Activated CD4-positive, alpha-beta T cell treated with anti-CD3 and anti-CD28 coated beads, Interleukin-2, amount 10 ng/mL, durations not matched to agents 24 days and 14 days (primary cell): ENCODE measurements at regions of chr5 and their contacts with region 1.

Region 1: GRCh38 chr5:143968011-143968878 is 156.3 kb downstream of the HMHB1 start:
- DNase-seq: peak; percentile 74
- H3K4me3 Mint-ChIP-seq: no peak overlapping the region
- H3K27ac Mint-ChIP-seq: no peak overlapping the region
- H3K4me1 Mint-ChIP-seq: peaks cover 3% of the 10 kb centered on the region
- H3K27me3 Mint-ChIP-seq: peaks cover 34% of the 10 kb centered on the region

Region 2: DNA sequence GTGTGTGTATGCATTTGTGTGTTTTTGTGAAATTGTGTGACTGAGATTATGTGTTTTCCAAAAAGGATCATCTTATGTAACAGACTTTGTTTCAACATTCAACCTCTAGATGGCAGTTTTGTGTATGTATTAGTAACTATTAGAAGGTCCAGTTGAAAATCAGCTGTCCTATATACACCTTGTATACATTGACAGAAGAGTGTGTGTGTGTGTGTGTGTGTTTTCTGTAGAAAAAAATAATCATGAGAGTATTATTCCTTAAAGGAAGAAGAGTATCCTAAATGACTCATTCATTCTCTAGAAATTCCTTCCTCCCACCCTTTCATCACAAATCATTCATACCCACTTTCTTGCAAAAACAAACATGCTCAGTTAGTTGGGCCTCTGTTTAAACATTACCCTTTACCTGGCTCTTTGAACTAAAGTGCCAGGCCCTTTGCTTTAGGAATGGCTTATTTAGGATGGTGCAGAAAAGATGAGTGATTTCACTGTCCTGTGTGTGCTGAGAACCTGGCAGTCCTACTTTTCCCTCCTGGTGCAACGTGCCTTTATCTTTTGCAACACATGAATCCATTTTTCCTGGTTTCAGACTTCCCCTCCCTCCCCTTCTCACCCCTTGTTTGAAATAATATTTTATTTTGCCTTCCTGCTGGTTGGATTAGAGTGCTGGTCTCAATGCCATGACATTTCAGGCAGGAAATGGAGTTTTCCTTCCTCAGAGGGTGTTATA is 1045.9 kb before region 1 on chr5:
- intact Hi-C with region 1: loop called (anchors 1 kb)
- DNase-seq: no peak
- H3K4me3 Mint-ChIP-seq: no peak overlapping the region
- H3K27ac Mint-ChIP-seq: no peak overlapping the region
- H3K4me1 Mint-ChIP-seq: peaks cover 36% of the 10 kb centered on the region
- H3K27me3 Mint-ChIP-seq: no peaks in the 10 kb centered on the region

Region 3: DNA sequence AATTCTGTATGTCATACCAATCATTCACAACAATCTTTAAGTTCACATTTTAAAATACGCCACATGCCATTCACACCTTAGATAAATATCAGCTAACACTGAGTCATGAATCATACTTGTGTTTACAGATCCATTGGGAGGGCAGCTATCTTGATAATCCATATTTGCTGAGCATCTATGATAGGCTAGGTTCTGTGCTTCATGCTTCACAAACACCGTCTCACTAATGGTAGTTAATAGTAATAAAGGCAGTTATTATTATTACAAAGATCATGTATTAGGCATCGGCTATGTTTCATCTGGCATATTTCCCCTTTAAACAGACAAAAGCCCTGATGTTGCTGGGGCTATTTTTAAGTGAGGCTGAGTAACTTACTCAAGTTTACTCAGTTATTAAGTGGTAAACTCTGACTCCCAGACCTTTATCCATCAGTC is 308.5 kb before region 1 on chr5:
- intact Hi-C with region 1: no loop called
- DNase-seq: no peak
- H3K4me3 Mint-ChIP-seq: no peak overlapping the region
- H3K27ac Mint-ChIP-seq: no peak overlapping the region
- H3K4me1 Mint-ChIP-seq: no peaks in the 10 kb centered on the region
- H3K27me3 Mint-ChIP-seq: peaks cover 19% of the 10 kb centered on the region

Region 4: DNA sequence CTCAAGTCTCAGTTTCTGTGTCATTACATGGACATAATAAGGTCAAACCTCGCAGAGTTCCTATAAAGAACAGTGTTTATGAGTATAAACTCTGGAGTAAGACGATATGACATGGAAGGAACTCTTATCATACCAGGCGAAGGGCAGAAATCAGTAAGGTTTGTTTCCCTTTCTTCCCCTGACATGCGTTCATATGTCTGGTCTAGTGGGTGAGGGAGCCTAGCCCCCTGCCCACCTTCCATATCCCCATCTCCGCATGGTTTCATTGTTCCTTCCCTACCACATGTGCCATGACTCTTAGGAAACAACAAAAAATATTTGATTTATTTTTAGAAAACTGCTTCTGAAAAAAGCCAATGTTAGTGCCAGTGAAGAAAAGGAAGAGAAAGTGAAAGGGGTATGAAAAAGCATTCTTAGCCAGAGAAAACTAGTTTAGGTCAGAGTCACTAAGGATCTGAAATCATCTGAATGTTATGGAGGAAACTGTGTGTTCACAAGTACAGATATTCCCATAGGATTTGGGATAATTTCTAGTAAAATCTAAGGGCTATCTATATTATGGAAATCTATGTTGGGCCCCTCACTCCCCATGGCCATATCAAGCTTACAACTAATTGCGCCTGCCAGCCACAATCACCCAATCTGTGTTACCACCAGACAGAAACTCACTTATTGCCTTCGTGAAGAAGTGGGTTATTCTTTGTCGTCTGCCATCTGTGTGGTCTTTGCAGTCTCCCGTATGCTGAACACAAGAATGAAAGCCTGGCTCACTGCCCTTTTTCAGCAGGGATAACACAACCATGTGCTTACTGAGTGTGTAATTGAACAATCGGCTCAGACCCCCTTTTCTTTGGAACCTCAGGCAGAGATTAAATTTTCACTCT is 176.2 kb before region 1 on chr5:
- intact Hi-C with region 1: no loop called
- DNase-seq: no peak
- H3K4me3 Mint-ChIP-seq: peak overlapping the region; percentile 66
- H3K27ac Mint-ChIP-seq: no peak overlapping the region
- H3K4me1 Mint-ChIP-seq: peaks cover 9% of the 10 kb centered on the region
- H3K27me3 Mint-ChIP-seq: peaks cover 9% of the 10 kb centered on the region

Region 5: DNA sequence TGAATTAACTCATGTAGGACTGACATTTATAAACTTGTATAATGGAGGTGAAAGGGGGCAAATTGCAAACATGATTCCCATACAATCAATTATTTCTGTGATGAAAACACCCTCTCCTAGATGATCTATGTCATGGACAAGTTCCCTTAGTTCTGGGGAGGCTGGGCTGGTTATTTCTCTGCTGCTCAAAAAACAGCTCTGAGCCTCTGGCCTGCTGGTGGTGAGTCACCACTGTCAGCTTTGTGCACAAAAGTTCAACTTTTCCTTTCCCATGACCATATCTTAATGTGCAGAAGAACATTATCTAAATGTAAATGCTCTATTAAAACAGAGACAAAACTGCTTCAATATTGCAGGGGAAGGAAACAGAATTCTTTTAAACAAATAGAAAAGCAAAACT is 71.3 kb before region 1 on chr5:
- intact Hi-C with region 1: loop called (anchors 5 kb)
- DNase-seq: peak; percentile 58
- H3K4me3 Mint-ChIP-seq: no peak overlapping the region
- H3K27ac Mint-ChIP-seq: no peak overlapping the region
- H3K4me1 Mint-ChIP-seq: peaks cover 26% of the 10 kb centered on the region
- H3K27me3 Mint-ChIP-seq: no peaks in the 10 kb centered on the region

Region 6: GRCh38 chr5:144084971-144085370 is 116.7 kb after region 1 on chr5:
- intact Hi-C with region 1: no loop called
- DNase-seq: no peak
- H3K4me3 Mint-ChIP-seq: no peak overlapping the region
- H3K27ac Mint-ChIP-seq: no peak overlapping the region
- H3K4me1 Mint-ChIP-seq: no peaks in the 10 kb centered on the region
- H3K27me3 Mint-ChIP-seq: no peaks in the 10 kb centered on the region